Activated CD8-positive, alpha-beta T cell treated with anti-CD3 and anti-CD28 coated beads, Interleukin-2, amount 10 ng/mL, durations not matched to agents 7 days and 5 days (primary cell): ENCODE measurements at regions of chr14 and their contacts with region 1.

Region 1: GRCh38 chr14:77151918-77152588 is 10.5 kb upstream of the ZDHHC22 start:
- DNase-seq: no peak
- ATAC-seq: peak; percentile 63
- H3K4me3 Mint-ChIP-seq: no peak overlapping the region
- H3K27ac Mint-ChIP-seq: no peak overlapping the region
- H3K4me1 Mint-ChIP-seq: no peaks in the 10 kb centered on the region
- H3K27me3 Mint-ChIP-seq: peaks cover 26% of the 10 kb centered on the region

Region 2: DNA sequence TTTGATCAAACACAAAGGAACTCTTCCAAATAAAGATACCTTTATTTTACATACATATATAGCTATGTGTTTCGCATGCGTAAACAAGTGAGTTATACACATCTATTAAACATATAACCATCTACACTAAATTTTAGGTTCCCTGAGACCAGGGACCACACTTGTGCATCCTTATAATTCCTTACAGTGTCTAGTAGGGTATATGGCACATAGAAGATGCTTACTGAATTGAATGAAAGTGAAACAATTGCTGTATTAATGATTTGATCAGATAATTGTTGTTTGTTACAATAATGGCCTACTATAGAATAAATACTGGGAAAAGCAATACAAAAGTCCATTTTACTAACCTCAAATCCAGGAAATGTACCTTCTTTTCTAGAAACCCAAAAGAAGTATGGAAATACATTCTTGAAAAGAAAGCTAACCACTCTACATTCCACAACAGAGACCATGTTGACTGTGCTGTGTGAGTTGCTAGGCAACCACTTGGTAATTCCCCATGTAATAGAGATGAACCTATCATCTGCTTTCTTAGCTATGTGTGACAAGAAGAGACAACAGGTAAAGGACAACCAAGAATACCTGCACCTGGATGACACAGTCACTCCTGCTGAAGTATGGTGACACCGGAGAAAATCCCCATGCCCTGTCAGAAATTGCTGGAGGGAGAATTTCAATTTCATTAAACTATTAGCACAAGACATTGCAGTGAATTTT is 65.9 kb before region 1 on chr14:
- CTCF ChIA-PET with region 1: no interaction called
- POLR2A ChIA-PET with region 1: no interaction called
- DNase-seq: no peak
- ATAC-seq: peak; percentile 49
- H3K4me3 Mint-ChIP-seq: no peak overlapping the region
- H3K27ac Mint-ChIP-seq: no peak overlapping the region
- H3K4me1 Mint-ChIP-seq: peaks cover 4% of the 10 kb centered on the region
- H3K27me3 Mint-ChIP-seq: peaks cover 6% of the 10 kb centered on the region

Region 3: DNA sequence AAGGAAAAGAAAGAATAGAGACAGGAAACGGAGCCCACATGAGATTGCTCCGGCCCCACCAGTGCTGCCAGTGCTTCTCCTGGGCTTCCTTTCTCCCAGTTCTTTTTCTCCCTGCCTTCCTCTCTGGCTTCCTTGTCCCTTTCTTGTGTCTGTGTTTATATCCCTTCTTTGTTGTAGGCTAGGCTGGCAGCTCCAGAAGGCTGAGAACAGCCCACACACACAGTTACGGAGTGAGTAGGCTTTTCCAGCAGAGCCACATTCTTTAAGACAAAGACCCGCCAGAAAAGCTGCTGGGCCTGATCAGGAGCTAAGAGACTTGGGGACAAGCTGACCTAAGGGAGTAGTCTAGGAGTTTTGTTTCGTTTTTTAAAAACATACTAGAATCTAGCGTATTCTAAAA is 41.0 kb before region 1 on chr14:
- CTCF ChIA-PET with region 1: interaction called, 11 read pairs
- POLR2A ChIA-PET with region 1: no interaction called
- DNase-seq: no peak
- ATAC-seq: no peak
- H3K4me3 Mint-ChIP-seq: no peak overlapping the region
- H3K27ac Mint-ChIP-seq: no peak overlapping the region
- H3K4me1 Mint-ChIP-seq: no peaks in the 10 kb centered on the region
- H3K27me3 Mint-ChIP-seq: no peaks in the 10 kb centered on the region

Region 4: GRCh38 chr14:77141214-77142004 is 10.6 kb before region 1 on chr14 and contains the start of gene ZDHHC22:
- CTCF ChIA-PET with region 1: interaction called, 16 read pairs
- POLR2A ChIA-PET with region 1: no interaction called
- DNase-seq: no peak
- ATAC-seq: peak; percentile 52
- H3K4me3 Mint-ChIP-seq: no peak within 1 kb of the TSS
- H3K27ac Mint-ChIP-seq: no peak within 1 kb of the TSS
- H3K4me1 Mint-ChIP-seq: peaks cover 16% of the 10 kb centered on the region
- H3K27me3 Mint-ChIP-seq: peaks cover 73% of the 10 kb centered on the region
- total RNA-seq, gene ZDHHC22: not detected

Region 5: DNA sequence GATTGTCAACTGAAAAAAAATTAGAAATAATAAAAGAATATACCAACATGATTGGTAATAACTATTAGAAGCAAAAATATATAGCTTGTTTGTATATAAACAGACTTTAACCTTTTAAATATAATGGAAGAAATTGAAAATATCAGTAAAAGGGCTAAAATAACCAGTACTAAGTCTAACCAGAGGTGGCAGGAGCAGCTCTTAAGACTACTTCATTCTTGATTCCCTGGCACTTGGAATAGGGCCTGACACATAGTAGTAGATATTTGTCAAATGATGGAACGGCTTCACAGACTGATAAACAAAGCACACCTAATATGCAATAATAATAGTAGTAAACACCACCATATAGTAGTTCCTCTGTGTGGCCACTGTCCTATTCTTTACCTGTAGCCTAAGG is 38.9 kb after region 1 on chr14:
- CTCF ChIA-PET with region 1: interaction called, 11 read pairs
- POLR2A ChIA-PET with region 1: no interaction called
- DNase-seq: no peak
- ATAC-seq: no peak
- H3K4me3 Mint-ChIP-seq: no peak overlapping the region
- H3K27ac Mint-ChIP-seq: no peak overlapping the region
- H3K4me1 Mint-ChIP-seq: no peaks in the 10 kb centered on the region
- H3K27me3 Mint-ChIP-seq: peaks cover 14% of the 10 kb centered on the region

Region 6: GRCh38 chr14:77212943-77213678 is 61.1 kb after region 1 on chr14:
- CTCF ChIA-PET with region 1: interaction called, 40 read pairs
- POLR2A ChIA-PET with region 1: no interaction called
- DNase-seq: peak; percentile 56
- ATAC-seq: peak; percentile 82
- H3K4me3 Mint-ChIP-seq: no peak overlapping the region
- H3K27ac Mint-ChIP-seq: no peak overlapping the region
- H3K4me1 Mint-ChIP-seq: no peaks in the 10 kb centered on the region
- H3K27me3 Mint-ChIP-seq: peaks cover 21% of the 10 kb centered on the region

Region 7: GRCh38 chr14:77301103-77301502 is 149.1 kb after region 1 on chr14:
- CTCF ChIA-PET with region 1: interaction called, 12 read pairs
- POLR2A ChIA-PET with region 1: no interaction called
- DNase-seq: peak; percentile 73
- ATAC-seq: peak; percentile 57
- H3K4me3 Mint-ChIP-seq: no peak overlapping the region
- H3K27ac Mint-ChIP-seq: no peak overlapping the region
- H3K4me1 Mint-ChIP-seq: peaks cover 15% of the 10 kb centered on the region
- H3K27me3 Mint-ChIP-seq: no peaks in the 10 kb centered on the region